ENCODE measurements at regions of chr14 and their contacts with region 1.

Region 1: GRCh38 chr14:91418387-91419043 is 895 bp upstream of the CCDC88C start:
- DNase-seq: peak; percentile 95
- H3K4me3 Mint-ChIP-seq: peak overlapping the region; percentile 76
- H3K27ac Mint-ChIP-seq: peak overlapping the region; percentile 88
- H3K4me1 Mint-ChIP-seq: peaks cover 36% of the 10 kb centered on the region
- H3K27me3 Mint-ChIP-seq: peaks cover 2% of the 10 kb centered on the region

Region 2: DNA sequence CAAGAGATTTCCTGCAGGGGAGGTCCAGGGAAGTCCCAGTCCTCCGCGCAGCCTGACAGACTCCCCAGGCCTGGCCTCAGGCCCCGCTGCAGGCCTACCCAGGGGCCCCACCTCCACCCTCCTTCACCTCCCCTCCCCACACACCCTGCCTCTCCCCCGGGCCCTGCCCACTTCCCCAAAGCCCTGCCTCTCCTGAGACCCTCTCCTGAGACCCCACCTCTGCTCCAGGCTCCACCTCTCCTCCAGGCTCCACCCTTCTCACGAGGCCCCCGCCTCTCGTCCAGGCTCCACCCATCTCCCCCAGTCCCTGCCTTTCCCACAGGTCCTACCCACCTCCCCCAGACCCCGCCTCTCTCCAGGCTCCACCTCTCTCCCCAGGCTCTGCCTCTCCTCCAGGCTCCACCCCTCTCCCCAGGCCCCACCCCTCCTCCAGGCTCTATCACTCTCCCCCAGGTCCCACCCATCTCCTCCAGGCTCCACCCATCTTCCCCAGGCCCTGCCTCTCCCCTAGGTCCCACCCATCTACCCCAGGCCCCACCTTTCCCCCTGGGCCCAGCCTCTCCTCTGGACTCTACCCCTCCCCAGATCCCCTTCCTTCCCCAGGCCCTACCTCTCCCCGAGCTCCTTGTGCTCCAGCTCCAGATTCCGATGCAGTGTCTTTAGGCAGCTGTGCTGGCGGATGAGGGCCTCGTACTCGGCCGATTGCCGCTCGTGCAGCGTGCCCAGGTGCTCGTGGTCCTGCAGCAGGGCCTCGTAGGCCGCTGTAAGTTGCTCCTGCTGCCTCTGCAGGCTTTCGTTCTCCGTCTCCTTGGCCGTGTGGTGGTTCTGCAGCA is 115.2 kb before region 1 on chr14:
- intact Hi-C with region 1: loop called (anchors 5 kb)
- DNase-seq: peak; percentile 86
- H3K4me3 Mint-ChIP-seq: peak overlapping the region; percentile 54
- H3K27ac Mint-ChIP-seq: peak overlapping the region; percentile 92
- H3K4me1 Mint-ChIP-seq: peaks cover 52% of the 10 kb centered on the region
- H3K27me3 Mint-ChIP-seq: no peaks in the 10 kb centered on the region

Region 3: DNA sequence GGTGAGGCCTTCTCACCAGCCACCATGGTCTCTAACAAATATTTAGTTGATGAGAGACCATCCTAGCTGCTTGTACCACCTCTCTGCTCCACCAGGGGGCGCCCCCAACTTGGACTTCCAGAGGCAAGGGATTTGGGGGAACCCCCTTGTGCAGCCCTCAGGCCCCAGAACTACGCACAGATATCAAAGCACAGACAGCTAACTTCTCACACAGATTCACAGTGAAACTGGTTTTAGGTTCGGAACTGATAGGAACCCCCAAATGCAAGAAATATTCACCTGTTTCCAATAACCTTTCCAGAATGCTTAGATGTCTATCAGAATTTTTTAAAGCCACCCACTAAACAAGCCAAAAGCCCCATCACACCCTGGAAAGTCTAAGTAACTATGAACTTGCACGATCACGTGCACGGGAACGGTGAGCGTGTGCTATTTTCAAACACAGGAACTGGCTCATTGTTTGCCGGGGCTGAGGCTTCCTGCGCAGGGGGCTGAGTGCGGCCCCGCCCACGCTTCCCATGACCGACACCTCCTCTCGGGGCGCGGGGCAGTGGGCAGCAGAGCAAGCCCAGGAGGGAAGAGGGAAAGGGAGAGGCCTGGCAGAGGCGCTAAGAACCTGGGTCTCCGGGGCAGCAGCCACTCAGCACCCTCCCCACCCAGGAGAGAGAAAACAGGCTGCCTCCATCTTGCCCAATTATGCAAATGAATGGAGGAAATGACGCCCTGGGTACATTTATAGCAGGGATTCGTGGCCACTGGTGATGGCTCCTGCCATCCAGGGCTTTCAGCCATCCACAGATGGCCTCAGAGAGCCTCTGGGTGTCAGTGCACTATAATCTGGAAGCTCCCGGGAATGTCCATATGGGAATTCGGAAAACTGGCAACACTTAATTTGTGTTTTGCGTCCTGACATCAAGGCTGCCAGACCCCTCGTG is 94.6 kb before region 1 on chr14:
- intact Hi-C with region 1: loop called (anchors 1 kb)
- DNase-seq: peak; percentile 97
- H3K4me3 Mint-ChIP-seq: peak overlapping the region; percentile 82
- H3K27ac Mint-ChIP-seq: peak overlapping the region; percentile 97
- H3K4me1 Mint-ChIP-seq: peaks cover 45% of the 10 kb centered on the region
- H3K27me3 Mint-ChIP-seq: no peaks in the 10 kb centered on the region

Region 4: DNA sequence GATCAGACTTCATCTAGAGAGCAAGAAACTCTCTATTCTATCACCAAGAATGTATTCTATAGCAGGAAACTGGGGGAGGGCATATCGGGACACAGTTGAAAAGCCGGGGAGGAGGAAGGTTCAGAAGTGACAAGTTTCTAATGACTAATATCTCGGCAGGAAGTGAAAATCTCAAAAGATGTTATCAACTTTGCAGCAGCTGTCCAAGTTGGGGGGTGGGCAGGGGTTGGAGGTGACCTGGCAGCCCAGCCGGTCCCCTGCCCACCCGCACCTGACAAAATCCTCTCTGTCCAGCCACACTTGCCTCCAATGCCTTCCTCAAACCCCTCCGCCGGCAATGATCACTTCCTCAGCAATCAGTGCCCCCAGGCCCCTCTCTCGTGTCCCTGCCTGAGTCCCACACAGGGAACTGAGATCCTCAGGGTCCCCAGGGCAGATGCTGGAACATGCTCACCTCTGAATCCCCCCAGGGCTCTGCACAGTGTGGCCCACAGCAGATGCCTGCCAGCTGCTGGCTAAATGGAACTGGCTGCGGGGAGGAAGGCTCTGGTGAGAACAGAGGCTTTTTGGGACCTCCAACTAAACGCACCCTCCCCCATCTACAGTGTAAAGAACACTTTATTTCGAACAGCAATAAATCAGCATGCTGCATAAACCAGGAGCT is 44.8 kb before region 1 on chr14:
- intact Hi-C with region 1: loop called (anchors 1 kb)
- DNase-seq: peak; percentile 84
- H3K4me3 Mint-ChIP-seq: peak overlapping the region; percentile 80
- H3K27ac Mint-ChIP-seq: peak overlapping the region; percentile 90
- H3K4me1 Mint-ChIP-seq: peaks cover 94% of the 10 kb centered on the region
- H3K27me3 Mint-ChIP-seq: no peaks in the 10 kb centered on the region

Region 5: GRCh38 chr14:91405241-91405721 is 13.2 kb before region 1 on chr14:
- intact Hi-C with region 1: loop called (anchors 1 kb)
- DNase-seq: peak; percentile 85
- H3K4me3 Mint-ChIP-seq: peak overlapping the region; percentile 76
- H3K27ac Mint-ChIP-seq: peak overlapping the region; percentile 92
- H3K4me1 Mint-ChIP-seq: peaks cover 79% of the 10 kb centered on the region
- H3K27me3 Mint-ChIP-seq: no peaks in the 10 kb centered on the region

Region 6: GRCh38 chr14:92106143-92106926 is 687.8 kb after region 1 on chr14 and contains the start of gene ATXN3:
- intact Hi-C with region 1: no loop called
- DNase-seq: peak; percentile 98
- H3K4me3 Mint-ChIP-seq: peak within 1 kb of the TSS; percentile 89
- H3K27ac Mint-ChIP-seq: peak within 1 kb of the TSS; percentile 89
- H3K4me1 Mint-ChIP-seq: peaks cover 27% of the 10 kb centered on the region
- H3K27me3 Mint-ChIP-seq: no peaks in the 10 kb centered on the region
- total RNA-seq, gene ATXN3: 23.7 and 25.2 TPM in 2 replicates